ENCODE measurements at regions of chr1 and their contacts with region 1.

Region 1: DNA sequence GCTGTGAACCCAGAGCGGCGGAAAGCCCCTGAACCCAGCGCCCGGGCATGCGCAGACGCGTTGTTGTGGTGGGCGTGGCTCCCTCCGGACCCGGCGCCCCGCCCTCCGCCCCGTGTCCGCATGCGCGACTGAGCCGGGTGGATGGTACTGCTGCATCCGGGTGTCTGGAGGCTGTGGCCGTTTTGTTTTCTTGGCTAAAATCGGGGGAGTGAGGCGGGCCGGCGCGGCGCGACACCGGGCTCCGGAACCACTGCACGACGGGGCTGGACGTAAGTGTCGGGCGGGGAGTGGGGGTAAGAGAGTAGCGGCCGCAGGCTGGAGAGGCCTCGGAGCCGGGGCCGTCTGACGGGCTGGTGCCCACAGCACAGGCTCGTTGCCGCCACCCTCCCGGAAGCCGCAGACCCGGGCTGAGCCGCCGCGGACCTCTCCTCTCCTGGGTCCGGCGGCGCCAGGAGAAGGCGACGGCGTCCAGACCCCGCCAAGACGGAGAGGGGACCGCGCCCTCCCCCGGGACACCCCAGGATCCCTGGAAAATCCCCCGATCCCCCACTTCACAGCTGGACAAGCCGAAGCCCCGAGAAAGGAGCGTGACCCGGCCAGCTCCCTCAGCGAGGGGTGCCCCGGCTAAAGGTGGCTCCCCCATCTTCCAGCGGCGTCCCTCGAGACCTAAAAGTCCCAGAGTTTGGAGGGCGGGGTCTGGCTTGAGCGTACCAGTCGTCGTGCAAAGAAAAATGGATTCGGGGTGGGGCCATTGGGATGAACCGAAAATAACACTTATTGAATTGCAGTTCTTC is at the start of gene TMEM50A:
- DNase-seq: peak; percentile 78
- ATAC-seq: peak; percentile 88
- H3K4me3 ChIP-seq: peak within 1 kb of the TSS; percentile 96 to 99 (median 99)
- H3K27ac ChIP-seq: peak within 1 kb of the TSS; percentile 90
- H3K4me1 ChIP-seq: peaks cover 10% of the 10 kb centered on the region
- H3K27me3 ChIP-seq: no peaks in the 10 kb centered on the region; a peak in 1 of 5 replicates
- CTCF ChIP-seq: no peak; the same call in 1 of the 2 replicates
- EP300 ChIP-seq: no peak
- POLR2A ChIP-seq: peak in 1 of 2 experiments; percentile 81; a peak in 2 of 4 replicates
- RAD21 ChIP-seq: no peak
- total RNA-seq, gene TMEM50A: 33.4 and 51.2 TPM in 2 replicates

Region 2: GRCh38 chr1:25247024-25247828 is 91.2 kb before region 1 on chr1 and contains the start of gene RSRP1:
- CTCF ChIA-PET with region 1: no interaction called
- POLR2A ChIA-PET with region 1: interaction called, 4 read pairs
- in situ Hi-C with region 1: no loop called
- intact Hi-C with region 1: loop called (anchors 5 kb)
- DNase-seq: peak; percentile 96
- ATAC-seq: peak; percentile 84
- H3K4me3 ChIP-seq: peak within 1 kb of the TSS; percentile 68 to 96 (median 93)
- H3K27ac ChIP-seq: peak within 1 kb of the TSS; percentile 84
- H3K4me1 ChIP-seq: peaks cover 32% of the 10 kb centered on the region
- H3K27me3 ChIP-seq: no peaks in the 10 kb centered on the region; a peak in 1 of 5 replicates
- CTCF ChIP-seq: no peak
- EP300 ChIP-seq: peak in 1 of 2 experiments; percentile 1; a peak in 1 of 4 replicates
- POLR2A ChIP-seq: peak; percentile 100
- RAD21 ChIP-seq: 0 out of 2 replicates have a peak, but pooled peaks have one; percentile 28
- total RNA-seq, gene RSRP1: 11.3 and 52.8 TPM in 2 replicates